ENCODE measurements at regions of chr6 and their contacts with region 1.

Region 1: DNA sequence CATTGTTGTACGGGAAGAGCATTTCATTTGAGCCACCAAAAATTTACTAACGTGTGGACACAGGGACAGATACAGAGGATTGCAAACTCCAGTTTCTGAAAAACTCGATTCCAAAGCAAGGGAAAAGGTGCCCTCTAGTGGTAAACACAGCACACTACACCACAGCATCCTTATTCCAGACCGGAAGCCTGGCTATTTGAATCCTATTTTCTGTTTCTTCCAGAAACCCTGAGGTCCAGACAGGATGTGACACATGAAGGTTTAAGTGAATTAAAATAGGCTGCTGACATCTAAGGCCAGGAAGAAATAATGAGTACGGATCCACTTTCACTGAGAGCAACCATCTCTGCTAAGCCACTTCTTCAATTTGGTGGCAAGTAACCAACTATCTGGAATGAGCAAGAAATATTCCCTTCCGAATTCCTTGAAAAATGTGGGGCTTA is 31.8 kb upstream of the GMPR start:
- DNase-seq: peak; percentile 56
- H3K4me3 Mint-ChIP-seq: no peak overlapping the region
- H3K27ac Mint-ChIP-seq: no peak overlapping the region
- H3K4me1 Mint-ChIP-seq: no peaks in the 10 kb centered on the region
- H3K27me3 Mint-ChIP-seq: peaks cover 15% of the 10 kb centered on the region

Region 2: DNA sequence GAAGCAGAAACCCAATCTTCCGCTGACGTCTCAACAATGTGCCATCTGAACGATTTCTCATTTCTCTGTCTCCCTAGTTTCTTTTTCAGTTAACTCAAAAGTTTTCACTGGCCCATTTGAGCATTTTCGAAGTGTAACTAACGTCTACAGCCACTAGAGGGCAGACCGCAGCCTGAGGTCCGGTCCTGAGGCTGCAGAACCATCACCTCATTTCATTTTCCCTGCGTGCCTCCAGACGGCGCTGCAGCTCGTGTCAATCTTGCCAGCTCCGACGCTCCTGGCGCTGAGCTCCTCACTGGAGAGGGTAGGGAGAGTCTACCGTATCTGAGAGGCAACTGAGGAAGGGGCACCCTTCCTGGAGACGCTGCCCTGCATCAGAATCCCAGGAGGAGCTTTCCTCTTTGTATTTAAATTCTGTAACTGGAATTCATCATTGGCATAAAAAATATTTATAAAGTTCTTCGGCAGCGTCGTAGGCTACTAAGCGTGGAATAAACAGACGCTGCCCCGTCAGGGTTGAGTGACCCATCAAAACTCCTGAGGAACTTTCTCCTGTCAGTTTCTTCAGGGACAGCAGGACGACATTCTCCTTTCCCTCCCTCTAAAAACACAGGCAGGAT is 515.3 kb before region 1 on chr6:
- CTCF ChIA-PET with region 1: interaction called, 12 read pairs
- POLR2A ChIA-PET with region 1: no interaction called
- DNase-seq: peak; percentile 84
- H3K4me3 Mint-ChIP-seq: no peak overlapping the region
- H3K27ac Mint-ChIP-seq: no peak overlapping the region
- H3K4me1 Mint-ChIP-seq: peaks cover 12% of the 10 kb centered on the region
- H3K27me3 Mint-ChIP-seq: no peaks in the 10 kb centered on the region

Region 3: DNA sequence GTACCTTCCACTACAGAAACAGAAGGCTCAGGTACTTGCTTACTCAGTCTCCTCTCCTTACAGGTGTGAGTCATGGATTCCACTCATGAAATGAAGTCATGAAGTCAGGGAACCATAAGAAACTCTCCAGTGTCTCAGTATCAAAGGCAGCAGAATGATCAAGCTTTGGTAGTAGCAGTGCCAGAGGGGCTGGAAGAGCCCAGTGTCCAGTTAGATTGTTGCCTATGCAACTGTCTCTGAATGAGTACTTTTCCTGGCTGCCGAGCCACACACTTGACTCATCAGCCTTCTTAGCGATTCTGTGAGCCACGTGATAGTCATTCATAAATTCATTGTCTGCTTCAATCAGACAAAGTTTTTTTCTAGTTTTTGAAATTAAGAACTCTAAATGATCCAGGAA is 491.6 kb before region 1 on chr6:
- CTCF ChIA-PET with region 1: no interaction called
- POLR2A ChIA-PET with region 1: no interaction called
- DNase-seq: no peak
- H3K4me3 Mint-ChIP-seq: no peak overlapping the region
- H3K27ac Mint-ChIP-seq: no peak overlapping the region
- H3K4me1 Mint-ChIP-seq: peaks cover 5% of the 10 kb centered on the region
- H3K27me3 Mint-ChIP-seq: no peaks in the 10 kb centered on the region